ENCODE measurements at regions of chr14 and their contacts with region 1.

Region 1: DNA sequence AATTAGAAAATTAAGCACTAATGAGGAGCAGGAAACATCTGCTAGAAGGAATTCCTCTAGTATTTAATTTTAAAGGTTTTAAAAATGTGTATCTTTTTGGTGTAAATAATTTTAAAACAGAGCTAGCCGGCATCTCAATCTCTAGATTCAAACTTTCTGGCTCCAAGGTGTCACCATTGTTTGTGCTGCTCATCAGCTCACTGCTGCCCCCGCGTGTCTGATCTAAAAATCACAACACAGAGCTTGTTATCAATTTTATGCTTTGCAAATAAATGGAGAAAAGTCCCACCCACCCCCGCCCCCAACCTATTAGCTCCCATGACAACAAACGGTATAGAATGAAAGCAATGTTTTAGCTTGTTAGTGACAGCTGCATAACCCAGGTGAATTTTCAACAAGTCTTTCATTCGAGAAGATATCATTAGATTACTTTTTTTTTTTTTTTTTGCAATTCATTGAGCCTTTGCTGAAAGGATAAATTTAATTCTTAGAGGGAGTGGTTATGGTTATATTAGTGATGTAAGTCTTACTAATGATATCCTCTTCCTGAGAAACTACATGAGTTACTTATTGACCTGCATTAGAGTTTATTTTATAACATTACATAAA is 11.3 kb upstream of the ABHD12B start:
- DNase-seq: peak; percentile 83 to 95 (median 90)
- ATAC-seq: peak; percentile 79
- H3K4me3 ChIP-seq: peak overlapping the region; percentile 83
- H3K4me3 Mint-ChIP-seq: peak overlapping the region; percentile 93
- H3K27ac ChIP-seq: no peak overlapping the region
- H3K27ac Mint-ChIP-seq: peak overlapping the region; percentile 89
- H3K4me1 ChIP-seq: peaks cover 11% of the 10 kb centered on the region
- H3K4me1 Mint-ChIP-seq: peaks cover 16% of the 10 kb centered on the region
- H3K27me3 ChIP-seq: no peaks in the 10 kb centered on the region
- H3K27me3 Mint-ChIP-seq: peaks cover 4% of the 10 kb centered on the region
- CTCF ChIP-seq: peak; percentile 87

Region 2: GRCh38 chr14:50321009-50321660 is 539.4 kb before region 1 on chr14:
- CTCF ChIA-PET with region 1: interaction called, 6 read pairs
- POLR2A ChIA-PET with region 1: interaction called, 3 read pairs
- intact Hi-C with region 1: loop called in 1 of 2 experiments (anchors 10 kb)
- DNase-seq: peak; percentile 29 to 93 (median 54)
- ATAC-seq: peak; percentile 96
- H3K4me3 ChIP-seq: peak overlapping the region; percentile 9
- H3K4me3 Mint-ChIP-seq: no peak overlapping the region
- H3K27ac ChIP-seq: peak overlapping the region in 1 of 2 donors; percentile 16
- H3K27ac Mint-ChIP-seq: no peak overlapping the region
- H3K4me1 ChIP-seq: peaks cover 8% of the 10 kb centered on the region
- H3K4me1 Mint-ChIP-seq: peaks cover 27% of the 10 kb centered on the region
- H3K27me3 ChIP-seq: no peaks in the 10 kb centered on the region
- H3K27me3 Mint-ChIP-seq: no peaks in the 10 kb centered on the region
- CTCF ChIP-seq: peak; percentile 87

Region 3: GRCh38 chr14:50599700-50600444 is 260.7 kb before region 1 on chr14:
- CTCF ChIA-PET with region 1: interaction called, 4 read pairs
- POLR2A ChIA-PET with region 1: interaction called, 6 read pairs
- intact Hi-C with region 1: loop called (anchors 1 to 2 kb)
- DNase-seq: peak in 3 of 14 experiments; percentile 32 to 44 (median 44)
- ATAC-seq: no peak
- H3K4me3 ChIP-seq: no peak overlapping the region
- H3K4me3 Mint-ChIP-seq: no peak overlapping the region
- H3K27ac ChIP-seq: no peak overlapping the region
- H3K27ac Mint-ChIP-seq: no peak overlapping the region
- H3K4me1 ChIP-seq: no peaks in the 10 kb centered on the region
- H3K4me1 Mint-ChIP-seq: no peaks in the 10 kb centered on the region
- H3K27me3 ChIP-seq: no peaks in the 10 kb centered on the region
- H3K27me3 Mint-ChIP-seq: no peaks in the 10 kb centered on the region
- CTCF ChIP-seq: peak; percentile 55

Region 4: GRCh38 chr14:50778721-50779483 is 81.7 kb before region 1 on chr14:
- CTCF ChIA-PET with region 1: interaction called, 43 read pairs
- POLR2A ChIA-PET with region 1: interaction called, 35 read pairs
- intact Hi-C with region 1: loop called (anchors 1 to 2 kb)
- DNase-seq: peak in 1 of 14 experiments; percentile 37
- ATAC-seq: no peak
- H3K4me3 ChIP-seq: no peak overlapping the region
- H3K4me3 Mint-ChIP-seq: no peak overlapping the region
- H3K27ac ChIP-seq: no peak overlapping the region
- H3K27ac Mint-ChIP-seq: peak overlapping the region; percentile 54
- H3K4me1 ChIP-seq: peaks cover 30% of the 10 kb centered on the region
- H3K4me1 Mint-ChIP-seq: peaks cover 77% of the 10 kb centered on the region
- H3K27me3 ChIP-seq: no peaks in the 10 kb centered on the region
- H3K27me3 Mint-ChIP-seq: no peaks in the 10 kb centered on the region
- CTCF ChIP-seq: no peak

Region 5: GRCh38 chr14:50792051-50792477 is 68.5 kb before region 1 on chr14:
- CTCF ChIA-PET with region 1: interaction called, 14 read pairs
- POLR2A ChIA-PET with region 1: interaction called, 47 read pairs
- intact Hi-C with region 1: no loop called
- DNase-seq: peak in 7 of 14 experiments; percentile 17 to 61 (median 38)
- ATAC-seq: peak; percentile 68
- H3K4me3 ChIP-seq: peak overlapping the region; percentile 41
- H3K4me3 Mint-ChIP-seq: peak overlapping the region; percentile 77
- H3K27ac ChIP-seq: peak overlapping the region; percentile 64 to 77
- H3K27ac Mint-ChIP-seq: peak overlapping the region; percentile 93
- H3K4me1 ChIP-seq: peaks cover 26% of the 10 kb centered on the region
- H3K4me1 Mint-ChIP-seq: peaks cover 87% of the 10 kb centered on the region
- H3K27me3 ChIP-seq: no peaks in the 10 kb centered on the region
- H3K27me3 Mint-ChIP-seq: no peaks in the 10 kb centered on the region
- CTCF ChIP-seq: no peak

Region 6: GRCh38 chr14:50823051-50823761 is 37.4 kb before region 1 on chr14:
- CTCF ChIA-PET with region 1: interaction called, 23 read pairs
- POLR2A ChIA-PET with region 1: interaction called, 38 read pairs
- intact Hi-C with region 1: no loop called
- DNase-seq: peak in 1 of 14 experiments; percentile 23
- ATAC-seq: peak; percentile 8
- H3K4me3 ChIP-seq: peak overlapping the region; percentile 11
- H3K4me3 Mint-ChIP-seq: peak overlapping the region; percentile 73
- H3K27ac ChIP-seq: peak overlapping the region; percentile 66 to 78
- H3K27ac Mint-ChIP-seq: peak overlapping the region; percentile 85
- H3K4me1 ChIP-seq: peaks cover 56% of the 10 kb centered on the region
- H3K4me1 Mint-ChIP-seq: peaks cover 95% of the 10 kb centered on the region
- H3K27me3 ChIP-seq: no peaks in the 10 kb centered on the region
- H3K27me3 Mint-ChIP-seq: no peaks in the 10 kb centered on the region
- CTCF ChIP-seq: no peak

Region 7: GRCh38 chr14:51395361-51395849 is 534.8 kb after region 1 on chr14:
- CTCF ChIA-PET with region 1: no interaction called
- POLR2A ChIA-PET with region 1: no interaction called
- intact Hi-C with region 1: no loop called
- DNase-seq: no peak
- ATAC-seq: no peak
- H3K4me3 ChIP-seq: no peak overlapping the region
- H3K4me3 Mint-ChIP-seq: no peak overlapping the region
- H3K27ac ChIP-seq: no peak overlapping the region
- H3K27ac Mint-ChIP-seq: no peak overlapping the region
- H3K4me1 ChIP-seq: no peaks in the 10 kb centered on the region
- H3K4me1 Mint-ChIP-seq: no peaks in the 10 kb centered on the region
- H3K27me3 ChIP-seq: peaks cover 0 to 3% of the 10 kb centered on the region in 2 experiments
- H3K27me3 Mint-ChIP-seq: peaks cover 18% of the 10 kb centered on the region
- CTCF ChIP-seq: no peak

Measured in CD4-positive, alpha-beta T cell (primary cell).